ENCODE measurements at regions of chr2 and their contacts with region 1.

Region 1: DNA sequence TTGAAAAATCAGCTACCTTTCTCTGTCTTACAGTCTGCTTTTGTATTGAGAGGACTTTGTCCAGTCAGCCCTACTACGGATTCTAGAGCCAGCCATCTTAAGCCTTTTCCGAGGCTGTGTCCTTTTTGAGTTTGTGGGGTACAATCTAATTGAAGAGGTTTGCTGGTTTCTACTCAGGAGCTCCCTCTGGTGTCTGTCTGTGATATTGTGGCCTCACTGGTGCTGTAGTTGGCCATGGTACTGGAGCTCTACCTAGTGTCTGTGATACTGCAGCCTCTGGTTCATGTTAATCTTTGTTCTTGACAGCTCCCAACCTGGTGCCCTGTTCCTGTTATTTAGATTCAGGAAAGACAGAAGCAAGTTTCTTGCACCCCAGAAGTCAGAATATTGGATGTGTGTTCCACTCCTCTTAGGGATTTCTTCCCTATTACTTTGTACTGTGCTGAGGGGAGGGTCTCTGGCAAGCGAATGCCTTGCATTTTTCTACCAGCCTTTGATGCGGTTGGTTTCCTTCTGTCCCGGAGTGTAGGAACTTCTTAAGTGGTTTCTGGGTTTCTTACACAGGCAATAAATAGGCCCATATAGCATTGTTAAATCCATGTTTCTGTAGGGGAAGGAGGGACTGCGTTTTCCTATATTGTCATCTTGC is 78.5 kb downstream of the ACSL3 start:
- DNase-seq: peak; percentile 81
- H3K4me3 Mint-ChIP-seq: no peak overlapping the region
- H3K27ac Mint-ChIP-seq: peak overlapping the region; percentile 0
- H3K4me1 Mint-ChIP-seq: peaks cover 7% of the 10 kb centered on the region
- H3K27me3 Mint-ChIP-seq: no peaks in the 10 kb centered on the region
- CTCF ChIP-seq: peak; percentile 82

Region 2: GRCh38 chr2:222214885-222215284 is 724.4 kb before region 1 on chr2:
- CTCF ChIA-PET with region 1: no interaction called
- POLR2A ChIA-PET with region 1: no interaction called
- intact Hi-C with region 1: no loop called
- DNase-seq: no peak
- H3K4me3 Mint-ChIP-seq: no peak overlapping the region
- H3K27ac Mint-ChIP-seq: no peak overlapping the region
- H3K4me1 Mint-ChIP-seq: no peaks in the 10 kb centered on the region
- H3K27me3 Mint-ChIP-seq: peaks cover 100% of the 10 kb centered on the region
- CTCF ChIP-seq: no peak

Region 3: GRCh38 chr2:222950638-222951285 is 11.4 kb after region 1 on chr2:
- CTCF ChIA-PET with region 1: interaction called, 12 read pairs
- POLR2A ChIA-PET with region 1: interaction called, 4 read pairs
- intact Hi-C with region 1: no loop called
- DNase-seq: peak; percentile 63
- H3K4me3 Mint-ChIP-seq: peak overlapping the region; percentile 5
- H3K27ac Mint-ChIP-seq: peak overlapping the region; percentile 72
- H3K4me1 Mint-ChIP-seq: peaks cover 4% of the 10 kb centered on the region
- H3K27me3 Mint-ChIP-seq: no peaks in the 10 kb centered on the region
- CTCF ChIP-seq: no peak